Sigmoid colon (tissue), 7 donors: ENCODE measurements at regions of chr4 and their contacts with region 1.

Region 1: DNA sequence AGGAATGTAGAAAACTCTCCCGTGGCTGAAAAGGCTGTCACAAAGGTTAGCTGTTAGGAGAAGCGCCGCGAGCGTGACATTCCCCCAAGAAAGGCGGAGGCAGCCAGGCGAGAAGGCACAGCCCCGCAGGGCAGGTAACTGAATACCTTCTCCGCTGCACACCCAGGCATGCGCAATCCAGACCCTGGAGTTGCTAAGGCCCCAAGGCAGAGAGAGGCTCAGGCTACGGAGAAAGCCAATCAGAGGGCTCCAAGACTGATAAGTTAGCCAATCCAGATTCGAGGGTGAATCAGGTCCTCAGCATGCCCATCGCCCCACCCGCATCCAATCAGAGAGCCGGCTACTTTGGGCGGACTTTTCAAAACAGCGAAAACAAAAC is 485 bp upstream of the CCNG2 start:
- DNase-seq: peak; percentile 99
- H3K4me3 ChIP-seq: peak overlapping the region; percentile 83 to 97 (median 86)
- H3K27ac ChIP-seq: peak overlapping the region; percentile 87 to 97 (median 92)
- H3K4me1 ChIP-seq: peaks cover 0 to 28% (median 10%) of the 10 kb centered on the region in 4 donors
- H3K27me3 ChIP-seq: no peaks in the 10 kb centered on the region
- CTCF ChIP-seq: no peak
- EP300 ChIP-seq: no peak
- POLR2A ChIP-seq: peak in 1 of 2 donors; percentile 65

Region 2: GRCh38 chr4:76148142-76148865 is 1008.2 kb before region 1 on chr4 and contains the start of gene NUP54:
- intact Hi-C with region 1: loop called (anchors 10 kb)
- DNase-seq: peak; percentile 96
- H3K4me3 ChIP-seq: peak within 1 kb of the TSS; percentile 70 to 94 (median 79)
- H3K27ac ChIP-seq: peak within 1 kb of the TSS; percentile 91 to 94 (median 92)
- H3K4me1 ChIP-seq: peaks cover 0 to 34% (median 32%) of the 10 kb centered on the region in 4 donors
- H3K27me3 ChIP-seq: no peaks in the 10 kb centered on the region
- CTCF ChIP-seq: no peak
- EP300 ChIP-seq: peak in 1 of 4 donors; percentile 22
- POLR2A ChIP-seq: peak; percentile 81 to 83
- total RNA-seq, gene NUP54: 38.0 to 57.9 (median 48.1) TPM

Region 3: DNA sequence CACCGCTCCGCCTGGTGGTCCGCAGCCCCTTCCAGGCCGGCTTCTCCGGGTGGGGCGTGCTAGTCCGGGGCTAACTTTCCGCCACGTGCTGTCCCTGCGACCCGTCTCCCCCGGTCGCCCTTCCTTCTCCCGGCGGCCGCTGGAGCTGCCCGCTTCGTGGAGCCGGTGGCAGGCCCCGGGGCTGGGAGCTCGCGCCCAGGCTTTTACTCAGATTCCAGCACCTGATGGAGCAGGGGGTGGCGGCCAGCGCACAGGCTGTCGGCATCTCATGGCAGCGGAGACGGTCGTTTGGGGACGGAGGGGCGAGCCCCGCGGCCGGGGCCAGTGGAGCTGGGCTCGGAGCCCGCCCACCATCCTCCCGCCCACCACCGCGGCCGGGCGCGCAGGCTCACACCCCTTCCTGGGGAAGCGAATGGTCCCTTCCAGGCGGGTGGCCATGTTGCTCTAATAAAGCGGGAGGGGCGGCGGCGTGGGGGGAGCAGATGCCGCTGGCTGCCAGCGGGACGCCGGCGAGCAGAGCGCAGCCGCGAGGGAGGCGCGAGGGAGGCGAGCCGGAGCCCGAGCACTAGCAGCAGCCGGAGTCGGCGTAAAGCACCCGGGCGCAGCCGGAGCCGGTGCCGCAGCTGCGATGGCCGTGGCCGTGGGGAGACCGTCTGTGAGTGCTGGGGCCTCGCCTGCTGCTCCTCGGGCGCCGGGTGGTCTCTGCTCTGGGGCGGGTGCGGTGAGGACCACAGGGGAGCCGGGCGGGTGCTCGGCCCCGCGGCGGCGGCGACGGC is 207.1 kb before region 1 on chr4 and contains the start of gene SEPTIN11:
- intact Hi-C with region 1: loop called (anchors 2 kb)
- DNase-seq: peak; percentile 97
- H3K4me3 ChIP-seq: peak within 1 kb of the TSS; percentile 70 to 87 (median 78)
- H3K27ac ChIP-seq: peak within 1 kb of the TSS; percentile 87 to 95 (median 92)
- H3K4me1 ChIP-seq: peaks cover 2 to 27% (median 16%) of the 10 kb centered on the region in 4 donors
- H3K27me3 ChIP-seq: no peaks in the 10 kb centered on the region
- CTCF ChIP-seq: no peak
- EP300 ChIP-seq: no peak
- POLR2A ChIP-seq: peak; percentile 52 to 64
- total RNA-seq, gene SEPTIN11: 43.0 to 143 (median 107) TPM

Region 4: DNA sequence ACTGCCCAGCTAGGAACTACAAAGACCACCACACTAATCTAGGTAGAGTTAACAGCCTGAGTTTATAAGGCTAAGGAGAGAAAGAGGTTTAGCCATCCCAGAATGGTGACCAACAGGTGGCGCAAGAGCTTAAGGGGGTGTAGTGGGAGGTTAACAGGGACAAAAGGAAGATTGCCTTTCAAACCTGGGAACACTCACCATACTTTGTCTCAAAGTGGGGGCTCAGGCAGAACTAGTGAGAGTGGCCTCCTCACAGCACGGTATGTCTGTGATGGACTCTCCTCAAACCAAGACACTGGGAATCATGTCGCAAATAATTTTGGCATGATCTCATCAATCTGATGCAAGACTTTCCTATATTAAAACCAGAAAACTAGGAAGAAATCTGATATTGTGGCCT is 104.2 kb before region 1 on chr4:
- intact Hi-C with region 1: loop called (anchors 5 kb)
- DNase-seq: no peak
- H3K4me3 ChIP-seq: no peak overlapping the region
- H3K27ac ChIP-seq: no peak overlapping the region
- H3K4me1 ChIP-seq: peaks cover 0 to 9% (median 4%) of the 10 kb centered on the region in 4 donors
- H3K27me3 ChIP-seq: no peaks in the 10 kb centered on the region
- CTCF ChIP-seq: peak in 1 of 4 experiments; percentile 9
- EP300 ChIP-seq: no peak
- POLR2A ChIP-seq: no peak

Region 5: DNA sequence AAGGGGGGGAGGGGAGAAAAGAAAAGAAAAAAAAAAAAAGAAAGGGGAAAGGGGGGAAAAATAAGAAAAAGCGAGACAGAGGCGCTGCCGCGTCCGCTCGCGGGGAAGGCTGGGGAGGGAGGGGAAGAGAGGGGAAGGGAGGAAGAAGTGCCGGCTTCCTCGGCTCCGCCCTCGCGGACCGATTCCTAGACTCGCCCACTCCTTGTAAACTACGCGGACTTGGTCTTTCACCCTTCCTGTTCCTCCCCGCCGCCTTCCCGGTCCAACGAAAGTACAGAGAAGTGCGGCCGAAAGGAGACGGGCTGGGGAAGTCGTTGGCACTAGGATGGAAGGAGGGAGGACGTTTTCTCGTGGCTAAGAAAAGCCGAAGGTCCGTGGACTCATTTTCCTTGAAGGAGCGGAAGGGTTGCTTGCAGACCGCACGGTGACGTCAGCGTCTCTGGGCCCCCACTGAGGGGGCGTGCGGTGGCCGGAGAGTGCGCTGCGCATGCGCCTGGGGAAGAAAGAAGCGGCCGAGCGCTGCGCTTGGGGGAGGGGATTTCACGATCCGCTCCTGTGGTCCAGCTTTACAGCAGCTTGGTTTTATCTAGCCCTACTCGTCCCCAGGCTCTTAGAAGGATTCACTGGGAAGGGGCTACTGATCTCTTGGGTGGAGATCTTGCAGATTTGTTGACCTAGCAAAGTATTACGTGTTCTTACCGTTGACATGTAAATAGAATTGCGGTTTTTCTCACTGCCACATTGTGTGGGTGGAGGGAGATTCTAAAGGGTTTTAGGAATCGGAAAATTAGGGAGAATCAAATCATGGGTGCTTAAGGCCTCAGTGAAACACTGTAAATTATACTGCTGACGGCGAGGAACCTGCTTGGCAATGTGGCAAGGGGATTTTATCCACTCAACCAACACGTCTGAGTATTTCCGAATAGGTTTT is 80.4 kb before region 1 on chr4 and contains the start of gene CCNI:
- intact Hi-C with region 1: loop called (anchors 1 kb)
- DNase-seq: peak; percentile 99
- H3K4me3 ChIP-seq: peak within 1 kb of the TSS; percentile 89 to 99 (median 94)
- H3K27ac ChIP-seq: peak within 1 kb of the TSS; percentile 98 to 100 (median 100)
- H3K4me1 ChIP-seq: peaks cover 0 to 42% (median 32%) of the 10 kb centered on the region in 4 donors
- H3K27me3 ChIP-seq: no peaks in the 10 kb centered on the region
- CTCF ChIP-seq: no peak
- EP300 ChIP-seq: peak in 3 of 4 donors; percentile 13 to 63 (median 30)
- POLR2A ChIP-seq: peak; percentile 56 to 74
- total RNA-seq, gene CCNI: 248 to 339 (median 288) TPM

Region 6: GRCh38 chr4:77095101-77095821 is 61.3 kb before region 1 on chr4:
- intact Hi-C with region 1: loop called (anchors 5 kb)
- DNase-seq: peak; percentile 86
- H3K4me3 ChIP-seq: no peak overlapping the region
- H3K27ac ChIP-seq: no peak overlapping the region
- H3K4me1 ChIP-seq: peaks cover 0 to 5% (median 0%) of the 10 kb centered on the region in 4 donors
- H3K27me3 ChIP-seq: no peaks in the 10 kb centered on the region
- CTCF ChIP-seq: peak; percentile 46 to 78 (median 70)
- EP300 ChIP-seq: no peak
- POLR2A ChIP-seq: no peak